ENCODE measurements at regions of chr7 and their contacts with region 1.

Region 1: GRCh38 chr7:33109005-33109757 is at the start of gene RP9:
- DNase-seq: peak; percentile 80
- H3K4me3 Mint-ChIP-seq: peak within 1 kb of the TSS; percentile 83
- H3K27ac Mint-ChIP-seq: peak within 1 kb of the TSS; percentile 54
- H3K4me1 Mint-ChIP-seq: peaks cover 31% of the 10 kb centered on the region
- H3K27me3 Mint-ChIP-seq: peaks cover 19% of the 10 kb centered on the region
- total RNA-seq, gene RP9: 9.7 to 11.5 TPM

Region 2: DNA sequence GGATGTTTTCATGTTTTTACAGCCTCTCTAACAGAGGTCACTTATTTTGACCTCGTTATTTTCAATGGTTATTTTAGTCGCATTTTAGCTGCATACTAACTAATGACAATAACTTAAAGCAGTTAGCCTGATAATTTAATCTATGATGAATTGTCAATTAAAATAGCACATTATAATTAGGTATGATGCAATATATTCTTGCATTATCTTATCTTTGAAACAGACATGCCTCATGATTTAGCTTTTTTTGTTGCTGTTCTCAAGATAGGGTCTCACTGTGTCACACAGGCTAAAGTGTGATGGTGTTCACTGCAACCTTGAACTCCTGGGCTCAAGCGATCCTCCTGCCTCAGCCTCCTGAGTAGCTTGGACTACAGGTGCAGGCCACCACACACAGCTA is 344.0 kb before region 1 on chr7:
- CTCF ChIA-PET with region 1: interaction called, 14 read pairs
- POLR2A ChIA-PET with region 1: no interaction called
- DNase-seq: no peak
- H3K4me3 Mint-ChIP-seq: no peak overlapping the region
- H3K27ac Mint-ChIP-seq: no peak overlapping the region
- H3K4me1 Mint-ChIP-seq: peaks cover 9% of the 10 kb centered on the region
- H3K27me3 Mint-ChIP-seq: peaks cover 65% of the 10 kb centered on the region

Region 3: DNA sequence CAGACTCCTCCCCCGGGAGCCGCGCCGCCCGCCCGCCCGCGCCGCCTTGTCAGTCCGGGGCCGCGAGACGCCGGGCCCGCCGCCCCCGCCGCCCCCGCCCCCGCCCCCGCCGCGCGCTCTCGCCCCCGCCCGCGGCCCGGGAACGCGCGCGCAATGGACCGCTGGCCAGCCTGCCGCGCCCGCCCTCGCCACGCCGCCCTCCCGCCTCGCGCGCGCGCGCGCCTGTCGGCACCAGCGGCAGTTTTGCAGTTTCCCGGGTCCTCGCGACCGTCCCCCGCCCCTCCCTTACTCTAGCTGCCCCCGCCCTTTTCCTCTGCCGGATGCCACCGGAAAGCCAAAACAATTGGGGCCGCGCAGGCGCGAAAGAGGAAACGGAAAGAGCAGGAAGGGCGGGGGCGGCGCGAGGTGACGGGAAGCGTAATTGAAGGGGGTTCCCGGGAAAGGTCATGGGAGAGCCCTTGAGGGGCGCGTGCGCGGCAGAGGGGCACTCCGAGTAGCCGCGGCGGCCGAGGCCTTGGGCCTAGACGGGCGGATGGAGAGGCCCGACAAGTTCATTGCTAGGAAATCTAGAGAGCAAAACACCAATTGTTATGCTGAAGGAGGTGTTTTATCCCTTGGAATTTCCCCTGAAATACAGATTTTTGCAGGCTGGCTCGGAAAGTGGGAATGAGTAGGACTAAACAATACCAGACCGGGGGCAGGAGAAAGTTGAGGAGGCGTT is 217.2 kb before region 1 on chr7:
- CTCF ChIA-PET with region 1: interaction called, 12 read pairs
- POLR2A ChIA-PET with region 1: interaction called, 20 read pairs
- DNase-seq: peak; percentile 97
- H3K4me3 Mint-ChIP-seq: peak overlapping the region; percentile 79
- H3K27ac Mint-ChIP-seq: peak overlapping the region; percentile 92
- H3K4me1 Mint-ChIP-seq: peaks cover 49% of the 10 kb centered on the region
- H3K27me3 Mint-ChIP-seq: no peaks in the 10 kb centered on the region

Region 4: GRCh38 chr7:32942786-32943653 is 166.2 kb before region 1 on chr7:
- CTCF ChIA-PET with region 1: interaction called, 11 read pairs
- POLR2A ChIA-PET with region 1: interaction called, 5 read pairs
- DNase-seq: peak; percentile 73
- H3K4me3 Mint-ChIP-seq: peak overlapping the region; percentile 90
- H3K27ac Mint-ChIP-seq: no peak overlapping the region
- H3K4me1 Mint-ChIP-seq: peaks cover 20% of the 10 kb centered on the region
- H3K27me3 Mint-ChIP-seq: peaks cover 12% of the 10 kb centered on the region

Region 5: DNA sequence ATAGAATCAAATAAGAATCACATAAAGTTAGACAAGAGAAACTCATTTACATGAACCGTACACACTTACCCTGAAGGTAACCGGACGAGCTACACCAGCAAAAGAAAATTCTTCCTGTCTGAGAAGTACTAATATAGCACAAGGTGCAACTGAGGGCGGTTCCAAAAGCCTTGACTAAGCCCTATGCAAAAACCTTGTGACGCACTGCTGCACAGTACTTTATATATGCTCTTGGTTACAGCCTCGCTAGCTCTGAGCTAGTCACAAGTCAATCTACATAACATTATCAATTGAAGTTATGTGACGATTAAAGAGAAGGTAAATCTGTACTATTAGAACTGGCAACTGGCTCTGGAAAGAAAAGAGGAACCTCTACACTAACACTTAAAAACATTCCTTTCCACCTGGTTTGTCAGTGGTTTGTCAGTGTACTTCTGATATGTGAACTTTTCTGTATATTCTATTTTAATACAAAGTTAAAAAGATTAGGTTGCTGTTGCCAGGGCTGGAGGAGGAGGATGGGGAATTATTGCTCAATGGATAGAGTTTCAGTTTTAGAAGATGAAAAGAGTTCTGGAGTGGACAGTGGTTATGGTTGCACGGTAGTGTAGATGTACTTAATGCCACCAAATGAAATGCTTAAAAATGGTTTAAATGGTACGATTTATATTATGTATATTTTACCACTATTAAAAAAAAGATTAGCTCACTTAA is 68.2 kb before region 1 on chr7:
- CTCF ChIA-PET with region 1: interaction called, 12 read pairs
- POLR2A ChIA-PET with region 1: interaction called, 3 read pairs
- DNase-seq: peak; percentile 75
- H3K4me3 Mint-ChIP-seq: peak overlapping the region; percentile 83
- H3K27ac Mint-ChIP-seq: peak overlapping the region; percentile 81
- H3K4me1 Mint-ChIP-seq: peaks cover 45% of the 10 kb centered on the region
- H3K27me3 Mint-ChIP-seq: no peaks in the 10 kb centered on the region

Region 6: GRCh38 chr7:33062782-33063443 is 46.3 kb before region 1 on chr7:
- CTCF ChIA-PET with region 1: interaction called, 30 read pairs
- POLR2A ChIA-PET with region 1: interaction called, 25 read pairs
- DNase-seq: peak; percentile 92
- H3K4me3 Mint-ChIP-seq: peak overlapping the region; percentile 78
- H3K27ac Mint-ChIP-seq: peak overlapping the region; percentile 78
- H3K4me1 Mint-ChIP-seq: peaks cover 38% of the 10 kb centered on the region
- H3K27me3 Mint-ChIP-seq: peaks cover 3% of the 10 kb centered on the region

Measured in activated CD4-positive, alpha-beta memory T cell treated with anti-CD3 and anti-CD28 coated beads, Interleukin-2, amount 10 ng/mL, durations not matched to agents 7 days and 5 days (primary cell).